Activated CD8-positive, alpha-beta memory T cell treated with anti-CD3 and anti-CD28 coated beads, Interleukin-2, amount 10 ng/mL, durations not matched to agents 7 days and 5 days (primary cell): ENCODE measurements at regions of chr3 and their contacts with region 1.

Region 1: DNA sequence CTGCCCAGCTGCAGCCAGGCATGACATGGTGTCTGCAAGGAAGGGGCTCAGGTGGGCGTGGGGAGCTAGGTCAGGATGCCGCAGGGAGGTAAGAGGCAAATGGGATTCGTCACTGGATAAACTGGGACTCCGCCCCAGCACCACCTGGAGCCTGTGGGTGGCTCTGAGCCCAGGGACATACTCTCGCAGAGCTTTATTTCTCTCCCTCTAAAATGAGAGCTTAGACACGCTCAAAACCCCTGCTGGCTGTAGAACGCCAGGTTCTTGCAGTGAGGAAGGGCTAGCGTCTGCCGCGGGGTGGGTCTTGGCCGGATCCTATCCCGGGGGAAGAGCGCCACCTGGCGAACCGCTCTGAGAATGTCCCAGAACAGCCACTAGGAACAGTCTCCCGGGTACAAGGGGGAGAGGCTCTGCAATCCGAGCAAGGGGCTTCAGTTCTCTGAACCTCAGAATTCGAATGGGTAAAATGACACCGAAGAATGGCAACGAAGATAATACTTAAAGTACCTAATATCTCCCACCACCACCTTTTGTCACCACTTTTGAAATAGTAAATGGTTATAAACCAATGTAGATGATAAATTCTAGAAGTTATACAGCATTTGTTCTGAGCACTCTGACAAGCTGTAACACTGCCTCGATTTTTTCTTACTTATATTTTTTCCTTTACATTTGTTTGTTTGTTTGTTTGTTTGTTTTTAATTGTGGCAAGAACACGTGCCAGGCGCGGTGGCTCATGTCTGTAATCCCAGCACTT is 53.2 kb upstream of the SRGAP3 start:
- DNase-seq: peak; percentile 79
- ATAC-seq: peak; percentile 97
- H3K4me3 Mint-ChIP-seq: no peak overlapping the region
- H3K27ac Mint-ChIP-seq: no peak overlapping the region
- H3K4me1 Mint-ChIP-seq: peaks cover 9% of the 10 kb centered on the region
- H3K27me3 Mint-ChIP-seq: peaks cover 26% of the 10 kb centered on the region

Region 2: GRCh38 chr3:8970971-8971589 is 331.5 kb before region 1 on chr3:
- CTCF ChIA-PET with region 1: interaction called, 64 read pairs
- DNase-seq: peak; percentile 80
- ATAC-seq: peak; percentile 78
- H3K4me3 Mint-ChIP-seq: no peak overlapping the region
- H3K27ac Mint-ChIP-seq: no peak overlapping the region
- H3K4me1 Mint-ChIP-seq: peaks cover 4% of the 10 kb centered on the region
- H3K27me3 Mint-ChIP-seq: peaks cover 17% of the 10 kb centered on the region

Region 3: GRCh38 chr3:8987645-8988383 is 314.8 kb before region 1 on chr3:
- CTCF ChIA-PET with region 1: interaction called, 69 read pairs
- DNase-seq: peak; percentile 74
- ATAC-seq: peak; percentile 87
- H3K4me3 Mint-ChIP-seq: no peak overlapping the region
- H3K27ac Mint-ChIP-seq: no peak overlapping the region
- H3K4me1 Mint-ChIP-seq: no peaks in the 10 kb centered on the region
- H3K27me3 Mint-ChIP-seq: peaks cover 2% of the 10 kb centered on the region

Region 4: GRCh38 chr3:9122732-9123364 is 179.8 kb before region 1 on chr3:
- CTCF ChIA-PET with region 1: no interaction called
- DNase-seq: no peak
- ATAC-seq: no peak
- H3K4me3 Mint-ChIP-seq: no peak overlapping the region
- H3K27ac Mint-ChIP-seq: no peak overlapping the region
- H3K4me1 Mint-ChIP-seq: peaks cover 5% of the 10 kb centered on the region
- H3K27me3 Mint-ChIP-seq: no peaks in the 10 kb centered on the region

Region 5: GRCh38 chr3:9249273-9250192 is 53.1 kb before region 1 on chr3 and contains the start of gene SRGAP3:
- CTCF ChIA-PET with region 1: interaction called, 10 read pairs
- DNase-seq: peak; percentile 90
- ATAC-seq: peak; percentile 100
- H3K4me3 Mint-ChIP-seq: peak within 1 kb of the TSS; percentile 73
- H3K27ac Mint-ChIP-seq: no peak within 1 kb of the TSS
- H3K4me1 Mint-ChIP-seq: peaks cover 21% of the 10 kb centered on the region
- H3K27me3 Mint-ChIP-seq: peaks cover 44% of the 10 kb centered on the region
- total RNA-seq, gene SRGAP3: 2.8 to 3.2 TPM

Region 6: GRCh38 chr3:9314796-9315195 is 12.2 kb after region 1 on chr3:
- CTCF ChIA-PET with region 1: interaction called, 18 read pairs
- DNase-seq: no peak
- ATAC-seq: no peak
- H3K4me3 Mint-ChIP-seq: no peak overlapping the region
- H3K27ac Mint-ChIP-seq: no peak overlapping the region
- H3K4me1 Mint-ChIP-seq: no peaks in the 10 kb centered on the region
- H3K27me3 Mint-ChIP-seq: peaks cover 4% of the 10 kb centered on the region